A549 (cell line): ENCODE measurements at regions of chr20 and their contacts with region 1.

Region 1: DNA sequence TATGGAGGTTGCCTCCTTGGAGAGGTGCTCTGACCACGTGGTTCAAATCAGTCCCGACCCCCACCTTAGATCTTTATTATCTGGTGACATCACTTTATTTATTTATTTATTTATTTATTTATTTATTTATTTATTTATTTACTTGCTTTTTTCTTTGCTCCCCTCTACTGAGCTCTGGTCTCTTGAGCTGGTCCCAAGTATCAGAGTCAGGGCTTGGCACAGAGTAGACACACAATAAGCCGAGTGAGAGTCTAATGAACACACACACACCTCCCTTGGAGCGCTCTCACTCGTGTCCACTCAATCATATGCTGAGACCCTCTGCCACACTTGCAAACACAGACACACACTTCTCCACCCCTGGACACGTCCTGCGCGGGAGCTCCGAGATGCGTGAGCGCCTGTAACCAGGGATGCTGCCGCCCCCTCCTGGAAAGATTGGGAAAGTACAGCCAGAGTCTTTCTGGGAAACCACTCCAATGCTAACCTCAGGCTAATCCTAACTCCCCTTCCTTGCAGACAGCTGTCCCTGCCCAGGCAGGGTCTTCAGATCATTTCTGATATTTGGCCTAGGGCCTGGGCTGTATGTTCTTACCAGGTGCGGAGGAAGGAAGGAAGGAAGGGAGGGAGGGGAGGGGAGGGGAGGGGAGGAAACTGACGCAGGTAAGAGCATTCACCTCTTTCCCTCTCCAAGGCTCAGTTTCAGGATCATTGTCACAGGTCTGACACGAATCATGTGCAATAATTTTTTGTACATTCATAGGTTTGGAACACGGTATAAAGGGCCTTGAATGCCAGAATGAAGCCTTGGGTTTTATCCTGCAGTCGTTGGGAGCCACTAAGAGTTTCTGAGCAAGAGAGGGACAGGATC is 70.9 kb downstream of the STK35 start:
- DNase-seq: peak; percentile 59 to 88
- ATAC-seq: peak; percentile 86 to 89
- H3K4me3 ChIP-seq: no peak overlapping the region; the same call in 2 of the 3 replicates
- H3K27ac ChIP-seq: no peak overlapping the region
- H3K4me1 ChIP-seq: no peaks in the 10 kb centered on the region
- CTCF ChIP-seq: peak; percentile 97
- EP300 ChIP-seq: no peak
- POLR2A ChIP-seq: no peak
- RAD21 ChIP-seq: peak; percentile 97

Region 2: GRCh38 chr20:1757606-1758512 is 414.7 kb before region 1 on chr20:
- CTCF ChIA-PET with region 1: interaction called, 14 read pairs
- POLR2A ChIA-PET with region 1: no interaction called
- DNase-seq: no peak
- ATAC-seq: no peak
- H3K4me3 ChIP-seq: no peak overlapping the region
- H3K27ac ChIP-seq: no peak overlapping the region
- H3K4me1 ChIP-seq: peaks cover 11% of the 10 kb centered on the region
- CTCF ChIP-seq: no peak
- EP300 ChIP-seq: no peak
- POLR2A ChIP-seq: no peak
- RAD21 ChIP-seq: no peak

Region 3: GRCh38 chr20:1965520-1966351 is 206.8 kb before region 1 on chr20:
- CTCF ChIA-PET with region 1: interaction called, 187 read pairs
- POLR2A ChIA-PET with region 1: no interaction called
- DNase-seq: peak; percentile 80 to 84
- ATAC-seq: peak; percentile 81 to 93
- H3K4me3 ChIP-seq: no peak overlapping the region
- H3K27ac ChIP-seq: peak overlapping the region; percentile 24 to 31; a peak in 3 of 6 replicates
- H3K4me1 ChIP-seq: 0 out of 3 replicates have a peak, but pooled peaks cover 6% of the 10 kb centered on the region
- CTCF ChIP-seq: peak; percentile 99
- EP300 ChIP-seq: no peak
- POLR2A ChIP-seq: no peak
- RAD21 ChIP-seq: peak; percentile 93 to 95

Region 4: DNA sequence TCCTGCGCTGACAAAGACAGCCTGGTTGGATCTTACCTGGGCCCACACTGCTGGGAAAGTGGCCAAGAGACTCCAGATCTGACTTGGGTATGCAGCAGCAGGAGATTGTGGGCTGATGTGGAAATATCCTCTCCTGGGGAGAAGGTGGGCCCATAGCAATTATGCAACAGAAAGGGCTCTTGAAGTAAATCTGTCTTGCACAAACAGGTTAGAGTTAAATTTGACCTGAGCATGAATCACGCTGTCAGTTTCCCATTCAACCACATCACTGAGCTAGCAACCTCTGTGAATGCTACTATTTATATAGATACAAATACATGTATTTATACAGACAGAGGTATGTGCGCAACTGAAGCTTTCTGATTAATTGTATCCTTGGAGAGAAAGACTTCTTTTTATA is 150.4 kb before region 1 on chr20:
- CTCF ChIA-PET with region 1: interaction called, 15 read pairs
- POLR2A ChIA-PET with region 1: no interaction called
- DNase-seq: no peak
- ATAC-seq: no peak
- H3K4me3 ChIP-seq: no peak overlapping the region
- H3K27ac ChIP-seq: no peak overlapping the region
- H3K4me1 ChIP-seq: no peaks in the 10 kb centered on the region
- CTCF ChIP-seq: no peak
- EP300 ChIP-seq: no peak
- POLR2A ChIP-seq: no peak
- RAD21 ChIP-seq: no peak

Region 5: DNA sequence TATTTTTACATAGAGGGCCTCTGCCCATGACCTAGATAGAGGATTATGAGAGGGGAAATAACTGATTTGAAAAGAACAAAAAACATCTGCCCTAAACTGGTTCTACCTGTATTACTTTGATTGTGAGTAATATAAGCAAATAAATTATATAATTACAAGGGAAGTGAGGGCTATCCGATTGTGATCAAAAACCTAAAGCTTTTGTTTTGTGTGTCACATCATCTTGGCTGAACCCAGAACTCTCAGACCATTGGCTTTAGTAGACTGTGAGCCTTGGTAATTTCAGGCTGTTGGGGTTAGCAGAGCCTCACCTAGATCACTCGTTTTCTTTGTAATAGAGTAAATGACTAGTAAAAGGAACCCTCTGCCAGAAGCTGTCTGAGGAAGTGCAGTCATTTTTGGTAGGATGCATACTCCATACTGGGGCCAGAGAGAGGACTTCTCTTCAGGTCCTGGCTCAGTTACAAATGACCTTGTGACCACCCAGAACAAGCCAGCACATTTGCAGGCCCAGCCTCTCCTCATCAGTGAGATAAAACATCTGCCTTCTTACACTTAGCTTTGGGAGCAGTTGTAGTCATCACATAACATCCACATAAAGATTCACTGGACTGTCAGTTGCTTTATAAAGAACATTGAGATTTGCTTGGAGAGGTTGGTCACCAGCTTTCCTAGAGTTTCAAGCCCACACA is 57.4 kb before region 1 on chr20:
- CTCF ChIA-PET with region 1: interaction called, 16 read pairs
- POLR2A ChIA-PET with region 1: no interaction called
- DNase-seq: no peak
- ATAC-seq: no peak
- H3K4me3 ChIP-seq: no peak overlapping the region
- H3K27ac ChIP-seq: no peak overlapping the region
- H3K4me1 ChIP-seq: no peaks in the 10 kb centered on the region; the same call in 1 of the 3 replicates
- CTCF ChIP-seq: no peak
- EP300 ChIP-seq: no peak
- POLR2A ChIP-seq: no peak
- RAD21 ChIP-seq: no peak

Region 6: DNA sequence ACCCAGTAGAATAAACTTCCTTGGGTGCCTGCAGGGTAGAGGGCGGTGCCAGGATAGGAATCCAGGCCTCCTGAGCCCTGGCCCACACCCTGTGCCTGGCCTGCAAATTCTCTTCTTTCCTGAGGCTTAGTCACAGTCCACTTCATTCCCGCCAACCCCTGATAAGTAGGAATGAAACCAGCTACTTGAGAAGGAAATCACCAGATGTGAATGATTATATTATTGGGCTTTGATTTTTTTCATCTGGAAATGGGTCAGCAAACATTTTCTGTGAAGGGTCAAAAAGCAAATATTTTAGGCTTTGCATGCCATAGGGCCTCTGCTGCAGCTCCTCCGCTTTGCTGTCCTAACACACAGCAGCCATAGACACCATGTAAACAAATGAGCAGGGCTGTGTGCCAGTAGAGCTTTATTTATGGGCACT is 20.7 kb before region 1 on chr20:
- CTCF ChIA-PET with region 1: interaction called, 36 read pairs
- POLR2A ChIA-PET with region 1: no interaction called
- DNase-seq: peak in 1 of 2 experiments; percentile 31
- ATAC-seq: peak in 1 of 2 experiments; percentile 60; a peak in 4 of 6 replicates
- H3K4me3 ChIP-seq: no peak overlapping the region
- H3K27ac ChIP-seq: no peak overlapping the region
- H3K4me1 ChIP-seq: peaks cover 12% of the 10 kb centered on the region; the same call in 1 of the 3 replicates
- CTCF ChIP-seq: no peak
- EP300 ChIP-seq: no peak
- POLR2A ChIP-seq: no peak
- RAD21 ChIP-seq: no peak

Region 7: GRCh38 chr20:2206957-2207769 is 34.6 kb after region 1 on chr20:
- CTCF ChIA-PET with region 1: interaction called, 26 read pairs
- POLR2A ChIA-PET with region 1: no interaction called
- DNase-seq: peak; percentile 73 to 90
- ATAC-seq: peak; percentile 96 to 99
- H3K4me3 ChIP-seq: peak overlapping the region; percentile 57
- H3K27ac ChIP-seq: peak overlapping the region; percentile 63 to 85
- H3K4me1 ChIP-seq: no peaks in the 10 kb centered on the region
- CTCF ChIP-seq: peak; percentile 86
- EP300 ChIP-seq: no peak
- POLR2A ChIP-seq: no peak
- RAD21 ChIP-seq: peak; percentile 83 to 95